ENCODE measurements at regions of chr7 and their contacts with region 1.

Region 1: DNA sequence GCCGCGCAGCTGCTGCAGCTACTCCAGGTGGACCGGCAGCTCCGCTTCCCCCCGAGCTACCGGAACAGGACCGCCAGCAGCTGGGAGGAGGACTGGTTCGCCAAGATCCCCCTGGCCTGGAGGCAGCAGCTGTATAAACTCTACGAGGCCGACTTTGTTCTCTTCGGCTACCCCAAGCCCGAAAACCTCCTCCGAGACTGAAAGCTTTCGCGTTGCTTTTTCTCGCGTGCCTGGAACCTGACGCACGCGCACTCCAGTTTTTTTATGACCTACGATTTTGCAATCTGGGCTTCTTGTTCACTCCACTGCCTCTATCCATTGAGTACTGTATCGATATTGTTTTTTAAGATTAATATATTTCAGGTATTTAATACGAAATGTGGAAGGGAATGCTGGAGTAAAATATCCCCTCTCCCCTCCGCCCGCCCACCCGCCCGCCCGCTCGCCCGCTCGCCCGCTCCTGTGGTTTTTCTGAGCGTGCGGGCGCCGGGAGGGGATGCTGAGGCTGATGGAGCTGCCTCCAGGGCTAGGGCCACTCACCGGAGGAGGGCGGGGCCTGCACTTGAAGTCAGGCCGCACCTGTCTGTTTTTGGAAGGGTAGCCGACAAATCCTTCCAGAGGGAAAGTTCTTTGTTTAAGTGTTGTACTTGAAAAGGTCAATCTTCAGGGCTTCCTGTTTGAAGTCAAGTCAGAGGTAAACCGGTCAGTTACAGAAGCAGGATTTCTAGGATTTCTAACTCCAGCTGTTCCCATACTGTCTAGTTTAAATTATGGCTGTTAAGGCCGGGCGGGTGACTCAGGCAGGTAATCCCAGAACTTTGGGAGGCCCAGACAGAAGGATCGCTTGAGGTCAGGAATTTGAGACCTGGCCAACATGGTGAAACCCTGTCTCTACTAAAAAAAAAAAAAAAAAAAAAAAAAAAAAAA is 30.5 kb downstream of the CHST12 start:
- DNase-seq: no peak
- ATAC-seq: no peak
- H3K4me3 ChIP-seq: no peak overlapping the region
- H3K27ac ChIP-seq: no peak overlapping the region
- H3K4me1 ChIP-seq: no peaks in the 10 kb centered on the region
- H3K27me3 ChIP-seq: no peaks in the 10 kb centered on the region
- CTCF ChIP-seq: no peak

Region 2: GRCh38 chr7:2157468-2158279 is 276.3 kb before region 1 on chr7:
- CTCF ChIA-PET with region 1: no interaction called
- POLR2A ChIA-PET with region 1: no interaction called
- intact Hi-C with region 1: no loop called
- DNase-seq: peak; percentile 91
- ATAC-seq: peak; percentile 98
- H3K4me3 ChIP-seq: no peak overlapping the region
- H3K27ac ChIP-seq: peak overlapping the region; percentile 60
- H3K4me1 ChIP-seq: peaks cover 19% of the 10 kb centered on the region
- H3K27me3 ChIP-seq: no peaks in the 10 kb centered on the region
- CTCF ChIP-seq: no peak

Region 3: DNA sequence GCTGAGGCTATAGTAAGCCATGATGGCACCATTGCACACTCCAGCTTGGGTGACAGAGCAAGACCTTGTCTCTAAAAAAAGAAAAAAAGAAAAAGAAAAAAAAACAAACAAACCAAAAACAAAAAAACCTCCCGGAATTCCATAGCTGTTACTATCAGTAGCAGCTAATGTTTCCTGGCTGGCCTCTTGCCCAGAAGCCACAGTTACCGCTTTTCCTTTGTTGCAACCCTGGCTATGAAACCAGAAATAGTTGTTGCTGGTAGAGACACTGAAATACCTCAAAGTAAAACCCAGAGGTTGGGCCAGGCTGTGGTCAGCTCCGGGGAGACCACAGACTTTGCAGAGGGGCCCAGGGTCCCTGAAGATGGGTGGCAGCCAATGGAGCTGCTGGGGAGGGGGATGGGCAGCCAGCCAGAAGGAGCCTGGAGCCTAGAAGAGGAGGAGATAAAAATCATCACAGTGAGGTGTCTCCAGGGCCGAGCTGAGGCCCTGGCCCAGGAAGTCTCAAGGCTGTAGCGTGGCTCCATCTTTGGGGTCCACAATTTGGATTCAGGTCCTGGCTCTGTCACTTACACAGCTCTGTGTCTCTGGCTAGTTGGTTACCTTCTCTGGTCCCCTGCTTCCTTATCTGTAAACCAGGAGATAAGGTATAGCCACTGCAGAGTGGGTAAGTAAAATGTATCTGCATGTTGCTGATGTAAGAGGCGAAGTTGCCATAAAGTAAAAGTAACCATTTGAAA is 33.9 kb before region 1 on chr7:
- CTCF ChIA-PET with region 1: interaction called, 16 read pairs
- POLR2A ChIA-PET with region 1: no interaction called
- intact Hi-C with region 1: no loop called
- DNase-seq: peak; percentile 88
- ATAC-seq: peak; percentile 39
- H3K4me3 ChIP-seq: peak overlapping the region; percentile 37; the same call in 1 of the 2 replicates
- H3K27ac ChIP-seq: no peak overlapping the region
- H3K4me1 ChIP-seq: peaks cover 22% of the 10 kb centered on the region
- H3K27me3 ChIP-seq: no peaks in the 10 kb centered on the region
- CTCF ChIP-seq: no peak

Measured in PC-3 (cell line).